Right ventricle myocardium inferior (tissue), 1 donor: ENCODE measurements at regions of chr1 and their contacts with region 1.

Region 1: DNA sequence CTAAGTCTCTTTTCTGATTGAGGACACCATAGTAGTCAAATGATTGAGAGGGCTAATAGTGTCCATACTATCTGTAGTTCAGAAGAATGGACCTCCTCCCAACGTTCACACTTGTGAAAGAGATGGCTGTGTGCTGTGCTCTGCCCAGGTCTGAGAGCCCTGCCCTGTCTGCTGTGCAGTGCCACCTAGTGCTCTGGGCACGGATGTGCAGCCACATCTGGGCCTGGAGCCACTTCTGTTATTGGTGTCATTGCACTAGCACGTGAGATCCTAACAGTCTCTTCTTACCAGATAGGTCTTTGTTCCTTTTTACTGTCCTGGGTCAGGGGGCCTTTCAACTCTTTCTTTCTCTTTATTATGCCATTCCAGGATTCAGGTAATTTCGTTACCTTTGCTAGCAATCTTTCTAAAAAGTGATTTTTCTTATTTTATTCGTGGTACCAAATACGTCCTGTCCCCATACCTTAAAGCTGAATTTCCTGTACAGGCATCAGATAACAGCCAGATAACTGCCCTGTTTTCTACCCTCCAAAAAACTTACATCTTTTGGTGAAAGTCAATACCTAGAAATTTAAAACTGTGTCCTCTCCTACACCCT is 21.7 kb downstream of the INTS3 start:
- DNase-seq: peak; percentile 93
- ATAC-seq: peak; percentile 93

Region 2: GRCh38 chr1:153677718-153678505 is 71.6 kb before region 1 on chr1:
- intact Hi-C with region 1: loop called (anchors 1 kb)
- DNase-seq: no peak
- ATAC-seq: peak; percentile 74